Activated naive CD8-positive, alpha-beta T cell treated with anti-CD3 and anti-CD28 coated beads, Interleukin-2, amount 10 ng/mL, durations not matched to agents 7 days and 5 days (primary cell): ENCODE measurements at regions of chr19 and their contacts with region 1.

Region 1: GRCh38 chr19:5622463-5623396 is at the starts of genes SAFB and SAFB2:
- DNase-seq: peak; percentile 99
- ATAC-seq: peak; percentile 95
- H3K4me3 Mint-ChIP-seq: peak within 1 kb of the TSS; percentile 99
- H3K27ac Mint-ChIP-seq: peak within 1 kb of the TSS; percentile 99
- H3K4me1 Mint-ChIP-seq: peaks cover 47% of the 10 kb centered on the region
- H3K27me3 Mint-ChIP-seq: no peaks in the 10 kb centered on the region
- total RNA-seq, gene SAFB: 144 to 147 TPM
- total RNA-seq, gene SAFB2: 131 to 140 TPM

Region 2: DNA sequence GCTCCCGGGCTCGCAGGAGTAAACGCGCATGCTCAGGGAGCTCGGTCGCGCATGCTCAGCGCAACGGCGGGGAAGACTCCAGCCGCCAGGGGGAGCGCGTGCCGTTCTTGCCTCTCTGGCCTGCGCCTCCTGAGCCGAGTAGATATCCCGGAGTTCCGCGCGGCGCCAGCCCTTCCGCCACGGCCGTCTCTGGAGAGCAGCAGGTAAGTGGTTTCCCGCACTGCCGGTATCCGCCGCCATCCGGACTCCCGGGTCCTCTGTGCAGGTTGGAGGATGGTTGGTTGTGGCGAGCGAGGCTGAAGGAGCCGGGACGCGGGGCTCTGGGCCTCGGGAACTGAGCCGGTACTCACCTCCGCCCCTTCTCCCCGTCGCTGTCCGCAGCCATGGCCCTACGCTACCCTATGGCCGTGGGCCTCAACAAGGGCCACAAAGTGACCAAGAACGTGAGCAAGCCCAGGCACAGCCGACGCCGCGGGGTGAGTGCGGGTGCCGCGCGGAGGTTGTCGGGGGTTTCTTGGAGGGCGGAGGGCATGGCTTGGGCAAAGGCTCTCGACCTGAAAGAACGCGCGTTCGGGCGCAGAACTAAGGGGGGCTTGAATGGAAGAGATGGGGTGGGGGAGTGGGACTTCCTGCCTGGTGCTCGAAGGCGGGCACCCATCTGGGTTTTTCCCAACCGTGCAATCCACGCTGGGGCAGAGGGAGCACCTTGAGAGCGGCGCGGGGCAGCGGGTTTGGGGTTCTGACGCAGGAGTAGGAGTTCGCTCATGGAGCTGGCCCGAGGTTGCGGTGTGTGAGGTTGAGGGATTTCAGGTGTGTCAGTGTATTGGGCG is 67.6 kb after region 1 on chr19 and contains the start of gene RPL36:
- POLR2A ChIA-PET with region 1: interaction called, 29 read pairs
- DNase-seq: peak; percentile 100
- ATAC-seq: peak; percentile 69
- H3K4me3 Mint-ChIP-seq: peak within 1 kb of the TSS; percentile 98
- H3K27ac Mint-ChIP-seq: peak within 1 kb of the TSS; percentile 95
- H3K4me1 Mint-ChIP-seq: peaks cover 16% of the 10 kb centered on the region
- H3K27me3 Mint-ChIP-seq: no peaks in the 10 kb centered on the region
- total RNA-seq, gene RPL36: 1,119 to 1,147 TPM